T-cell (primary cell): ENCODE measurements at regions of chr1 and their contacts with region 1.

Region 1: GRCh38 chr1:53945433-53946251 is at the start of gene IFT25:
- DNase-seq: peak; percentile 93 to 100 (median 97)
- ATAC-seq: peak; percentile 77 to 84 (median 79)
- H3K4me3 ChIP-seq: peak within 1 kb of the TSS; percentile 76 to 84
- H3K4me3 Mint-ChIP-seq: peak within 1 kb of the TSS; percentile 93 to 96 (median 96)
- H3K27ac ChIP-seq: peak within 1 kb of the TSS; percentile 75
- H3K27ac Mint-ChIP-seq: peak within 1 kb of the TSS; percentile 91 to 94
- H3K4me1 ChIP-seq: peaks cover 7 to 29% of the 10 kb centered on the region in 2 experiments
- H3K4me1 Mint-ChIP-seq: peaks cover 47 to 57% (median 52%) of the 10 kb centered on the region in 3 donors
- H3K27me3 ChIP-seq: no peaks in the 10 kb centered on the region
- H3K27me3 Mint-ChIP-seq: no peaks in the 10 kb centered on the region
- total RNA-seq, gene IFT25: 24.5 to 33.1 (median 31.2) TPM

Region 2: DNA sequence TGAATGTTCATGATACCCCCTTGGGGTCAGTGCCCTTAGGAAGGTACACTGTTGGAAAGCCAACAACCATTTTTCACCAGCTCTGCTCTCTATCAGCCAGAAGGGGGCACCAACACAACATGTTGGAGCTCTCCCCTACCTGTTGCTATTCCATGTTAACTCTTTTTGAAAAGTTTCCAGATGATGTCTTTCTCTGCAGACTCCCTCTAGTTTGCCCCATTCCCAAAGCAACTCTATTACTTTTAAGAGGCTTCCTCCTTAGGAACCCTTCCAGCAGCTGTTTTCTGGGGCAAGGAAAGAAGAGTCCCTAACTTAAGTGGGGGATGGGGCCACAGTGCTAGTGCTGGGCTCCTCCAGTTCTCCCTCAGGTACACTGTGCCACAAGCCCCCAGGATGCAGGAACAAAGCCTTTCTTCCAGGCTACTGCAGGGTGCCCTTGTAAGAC is 84.7 kb before region 1 on chr1:
- CTCF ChIA-PET with region 1: interaction called, 5 to 13 read pairs
- POLR2A ChIA-PET with region 1: interaction called, 3 read pairs
- DNase-seq: peak in 34 of 35 experiments; percentile 5 to 78 (median 32)
- ATAC-seq: peak; percentile 50 to 75 (median 70)
- H3K4me3 ChIP-seq: no peak overlapping the region
- H3K4me3 Mint-ChIP-seq: no peak overlapping the region
- H3K27ac ChIP-seq: no peak overlapping the region
- H3K27ac Mint-ChIP-seq: no peak overlapping the region
- H3K4me1 ChIP-seq: no peaks in the 10 kb centered on the region
- H3K4me1 Mint-ChIP-seq: peaks cover 0 to 14% (median 7%) of the 10 kb centered on the region in 3 donors
- H3K27me3 ChIP-seq: no peaks in the 10 kb centered on the region
- H3K27me3 Mint-ChIP-seq: no peaks in the 10 kb centered on the region